ENCODE measurements at regions of chr5 and their contacts with region 1.

Region 1: GRCh38 chr5:151523335-151523734 is 67.8 kb downstream of the FAT2 start:
- DNase-seq: no peak
- ATAC-seq: no peak

Region 2: GRCh38 chr5:151534350-151534749 is 11.0 kb after region 1 on chr5:
- intact Hi-C with region 1: no loop called
- DNase-seq: no peak
- ATAC-seq: no peak

Region 3: GRCh38 chr5:151651997-151652645 is 128.8 kb after region 1 on chr5:
- intact Hi-C with region 1: loop called (anchors 1 kb)
- DNase-seq: no peak
- ATAC-seq: peak; percentile 89

Region 4: GRCh38 chr5:151740336-151740942 is 217.1 kb after region 1 on chr5:
- intact Hi-C with region 1: loop called (anchors 10 kb)
- DNase-seq: peak; percentile 76
- ATAC-seq: peak; percentile 79

Measured in Right ventricle myocardium inferior (tissue), 1 donor.